CD14-positive monocyte (primary cell): ENCODE measurements at regions of chr2 and their contacts with region 1.

Region 1: DNA sequence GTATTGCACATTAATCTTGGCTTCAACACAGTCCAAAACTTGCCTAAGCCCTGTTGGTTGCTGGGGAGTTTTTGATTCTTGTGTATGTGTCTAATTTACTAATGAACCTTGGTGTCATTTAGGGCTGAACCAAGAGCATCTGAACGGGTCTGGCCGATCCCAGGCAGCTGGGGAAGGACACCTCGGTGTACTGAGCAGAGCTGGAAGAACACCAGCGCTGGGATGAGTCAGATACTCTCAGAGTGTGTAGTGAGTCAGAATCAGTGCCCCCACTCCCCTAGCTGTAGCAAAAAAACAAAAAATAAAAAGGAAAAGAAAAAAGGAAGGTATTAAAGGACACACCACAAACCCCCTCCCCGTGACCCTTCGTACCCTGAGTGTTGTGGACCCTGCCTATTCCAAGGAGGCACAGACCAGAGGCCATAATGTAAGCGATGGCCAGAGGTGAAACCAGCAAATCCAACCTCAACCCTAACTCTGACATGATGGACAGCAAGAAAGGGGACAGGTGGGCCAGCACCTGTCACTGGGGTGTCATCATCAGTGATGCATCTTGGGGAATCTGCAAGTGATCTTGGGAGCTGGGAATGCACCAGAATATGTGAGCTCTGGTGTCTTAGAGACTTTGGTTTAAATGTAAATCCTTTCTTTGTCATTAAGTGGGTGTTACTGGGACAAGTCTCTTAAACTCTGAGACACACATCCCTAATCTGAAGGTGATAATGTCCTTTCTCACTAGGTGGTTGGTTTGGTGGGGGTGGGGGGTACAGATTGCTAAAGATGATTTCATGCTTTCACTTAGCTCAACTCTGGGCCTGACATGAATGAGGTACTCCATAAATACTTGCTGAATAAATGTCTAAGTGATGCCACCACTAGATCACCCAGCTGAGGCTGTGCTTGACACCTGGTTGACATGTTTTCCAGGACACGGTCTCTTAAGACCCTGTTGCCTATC is 34.2 kb upstream of the NCOA1 start:
- DNase-seq: peak; percentile 37 to 83 (median 56)
- H3K4me3 ChIP-seq: no peak overlapping the region
- H3K4me3 Mint-ChIP-seq: peak overlapping the region in 1 of 2 donors; percentile 75
- H3K27ac ChIP-seq: no peak overlapping the region
- H3K27ac Mint-ChIP-seq: peak overlapping the region in 5 of 7 donors; percentile 9 to 85 (median 48)
- H3K4me1 ChIP-seq: peaks cover 43 to 61% of the 10 kb centered on the region in 2 donors
- H3K4me1 Mint-ChIP-seq: peaks cover 57% of the 10 kb centered on the region
- H3K27me3 ChIP-seq: no peaks in the 10 kb centered on the region
- H3K27me3 Mint-ChIP-seq: peaks cover 0 to 4% (median 0%) of the 10 kb centered on the region in 3 donors
- CTCF ChIP-seq: no peak

Region 2: GRCh38 chr2:24351981-24352380 is 104.9 kb before region 1 on chr2:
- intact Hi-C with region 1: no loop called
- DNase-seq: no peak
- H3K4me3 ChIP-seq: no peak overlapping the region
- H3K4me3 Mint-ChIP-seq: no peak overlapping the region
- H3K27ac ChIP-seq: no peak overlapping the region
- H3K27ac Mint-ChIP-seq: no peak overlapping the region
- H3K4me1 ChIP-seq: peaks cover 41 to 51% of the 10 kb centered on the region in 2 donors
- H3K4me1 Mint-ChIP-seq: peaks cover 73% of the 10 kb centered on the region
- H3K27me3 ChIP-seq: no peaks in the 10 kb centered on the region
- H3K27me3 Mint-ChIP-seq: no peaks in the 10 kb centered on the region
- CTCF ChIP-seq: peak; percentile 27

Region 3: DNA sequence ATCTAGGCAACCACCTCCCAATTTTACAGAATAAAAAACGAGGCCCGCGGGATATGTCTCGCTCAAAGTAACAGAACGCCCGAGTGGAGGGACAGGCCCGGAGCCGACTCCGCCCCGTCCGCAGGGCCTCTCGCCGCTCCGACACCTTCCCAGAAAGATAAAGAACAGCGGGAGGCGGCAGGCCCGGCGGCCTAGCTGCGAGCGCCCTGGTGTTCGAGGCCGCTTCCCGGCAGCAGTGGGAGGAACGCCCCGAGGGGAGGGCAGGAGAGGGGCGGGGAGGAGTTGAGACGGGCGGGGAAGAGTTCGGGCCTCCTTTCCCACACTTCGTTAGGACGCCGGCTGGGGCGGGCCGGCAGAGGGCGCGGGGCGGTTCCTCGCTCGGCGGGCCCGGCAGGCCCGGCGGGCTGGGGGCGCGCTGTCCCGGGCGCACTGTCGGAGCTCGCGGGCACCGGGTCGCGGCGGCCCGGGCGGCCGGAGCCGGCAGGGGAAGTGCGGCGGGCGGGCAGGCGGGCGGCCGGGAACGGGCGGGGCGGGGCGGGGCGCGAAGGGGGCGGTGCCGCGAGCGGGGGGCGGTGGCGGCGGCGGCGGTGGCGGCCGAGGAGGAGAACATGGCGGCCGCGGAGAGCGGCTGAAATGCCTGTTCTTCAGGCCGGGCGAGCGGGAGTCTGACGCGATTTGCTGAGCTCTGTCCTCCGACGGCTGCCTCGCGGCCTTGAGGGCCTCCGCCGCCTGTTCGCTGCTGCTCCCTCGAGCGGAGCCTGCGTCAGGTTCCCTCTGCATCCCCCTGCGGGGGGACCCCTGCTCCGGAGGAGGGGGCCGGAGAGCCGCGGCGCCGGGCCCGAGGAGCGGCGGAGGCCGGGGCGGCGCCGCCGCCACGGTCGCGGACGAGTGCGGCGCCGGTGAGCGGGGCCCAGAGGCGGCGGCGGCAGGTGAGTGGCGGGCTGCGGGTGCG is 34.1 kb after region 1 on chr2 and contains the start of gene NCOA1:
- intact Hi-C with region 1: loop called (anchors 5 kb)
- DNase-seq: peak; percentile 61 to 72 (median 67)
- H3K4me3 ChIP-seq: peak within 1 kb of the TSS; percentile 64 to 96 (median 85)
- H3K4me3 Mint-ChIP-seq: peak within 1 kb of the TSS; percentile 95 to 96
- H3K27ac ChIP-seq: peak within 1 kb of the TSS; percentile 82 to 87
- H3K27ac Mint-ChIP-seq: peak within 1 kb of the TSS; percentile 87 to 96 (median 93)
- H3K4me1 ChIP-seq: peaks cover 40 to 41% of the 10 kb centered on the region in 2 donors
- H3K4me1 Mint-ChIP-seq: peaks cover 45% of the 10 kb centered on the region
- H3K27me3 ChIP-seq: no peaks in the 10 kb centered on the region
- H3K27me3 Mint-ChIP-seq: no peaks in the 10 kb centered on the region
- CTCF ChIP-seq: no peak
- polyA plus RNA-seq, gene NCOA1: 7.3 to 30.2 (median 10.2) TPM